H1 (cell line): ENCODE measurements at regions of chr17 and their contacts with region 1.

Region 1: DNA sequence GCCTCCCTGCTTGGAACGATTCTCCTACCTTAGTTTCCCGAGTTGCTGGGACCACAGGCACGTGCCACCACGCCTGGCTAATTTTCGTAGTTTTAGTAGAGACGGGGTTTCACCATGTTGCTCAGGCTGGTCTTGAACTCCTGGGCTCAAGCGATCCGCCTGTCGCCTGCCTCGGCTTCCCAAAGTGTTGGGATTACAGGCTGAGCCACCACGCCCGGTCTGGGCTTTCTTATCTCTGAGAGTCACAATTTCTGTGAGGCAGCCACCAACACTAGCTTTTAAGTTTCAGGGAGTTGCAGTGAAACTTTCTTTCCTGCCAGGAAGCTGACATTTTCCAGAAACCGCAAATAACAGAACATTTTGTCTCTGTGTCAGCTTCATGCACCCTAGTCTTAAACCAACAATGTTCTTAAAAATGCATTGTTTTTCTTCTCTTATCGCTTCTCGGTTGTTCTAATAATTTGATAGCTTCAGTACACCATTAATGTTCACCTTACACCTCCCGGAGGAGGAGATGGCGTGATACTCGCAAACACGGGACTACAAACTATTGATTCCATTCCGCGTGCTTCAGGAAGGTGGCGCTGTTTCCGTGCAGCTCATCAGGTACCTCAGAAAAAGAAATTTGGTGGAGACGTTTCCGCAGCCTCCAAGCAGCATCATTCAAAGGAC is 7.4 kb upstream of the DHRS7B start:
- DNase-seq: peak in 1 of 2 experiments; percentile 76
- H3K4me3 ChIP-seq: no peak overlapping the region
- H3K27ac ChIP-seq: no peak overlapping the region
- H3K4me1 ChIP-seq: peaks cover 0 to 3% (median 0%) of the 10 kb centered on the region in 4 experiments; a peak in 1 of 7 replicates
- H3K27me3 ChIP-seq: no peaks in the 10 kb centered on the region
- CTCF ChIP-seq: peak; percentile 85 to 92 (median 86)
- EP300 ChIP-seq: no peak
- POLR2A ChIP-seq: no peak
- RAD21 ChIP-seq: peak; percentile 78 to 82

Region 2: DNA sequence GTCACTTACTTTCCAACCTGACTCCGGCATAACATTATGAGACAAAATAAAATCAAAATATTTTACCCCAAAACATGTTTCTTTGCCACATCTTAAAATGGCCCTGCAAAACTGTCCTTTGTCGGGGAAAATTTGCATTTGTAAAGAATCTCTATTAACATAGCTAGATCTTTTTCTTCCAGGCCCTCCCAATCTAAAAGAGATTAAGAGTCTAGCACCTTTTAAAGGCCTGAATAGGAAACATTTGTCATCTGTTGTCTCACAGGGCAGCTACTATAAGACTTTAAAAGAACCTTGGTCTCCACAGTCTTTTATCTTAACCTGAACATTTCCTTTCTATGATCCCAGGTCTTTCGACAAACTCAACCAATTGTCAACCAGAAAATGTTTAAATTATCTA is 10.7 kb before region 1 on chr17:
- CTCF ChIA-PET with region 1: interaction called, 20 read pairs
- POLR2A ChIA-PET with region 1: interaction called, 3 read pairs
- DNase-seq: no peak
- H3K4me3 ChIP-seq: peak overlapping the region in 1 of 4 experiments; percentile 23; a peak in 1 of 8 replicates
- H3K27ac ChIP-seq: no peak overlapping the region
- H3K4me1 ChIP-seq: peaks cover 1 to 7% (median 6%) of the 10 kb centered on the region in 4 experiments; a peak in 5 of 7 replicates
- H3K27me3 ChIP-seq: no peaks in the 10 kb centered on the region
- CTCF ChIP-seq: no peak
- EP300 ChIP-seq: no peak
- POLR2A ChIP-seq: no peak
- RAD21 ChIP-seq: no peak